ENCODE measurements at regions of chr22 and their contacts with region 1.

Region 1: GRCh38 chr22:43036282-43036829 is 21.4 kb upstream of the PACSIN2 start:
- DNase-seq: no peak
- H3K4me3 Mint-ChIP-seq: no peak overlapping the region
- H3K27ac Mint-ChIP-seq: no peak overlapping the region
- H3K4me1 Mint-ChIP-seq: peaks cover 2% of the 10 kb centered on the region
- H3K27me3 Mint-ChIP-seq: no peaks in the 10 kb centered on the region

Region 2: DNA sequence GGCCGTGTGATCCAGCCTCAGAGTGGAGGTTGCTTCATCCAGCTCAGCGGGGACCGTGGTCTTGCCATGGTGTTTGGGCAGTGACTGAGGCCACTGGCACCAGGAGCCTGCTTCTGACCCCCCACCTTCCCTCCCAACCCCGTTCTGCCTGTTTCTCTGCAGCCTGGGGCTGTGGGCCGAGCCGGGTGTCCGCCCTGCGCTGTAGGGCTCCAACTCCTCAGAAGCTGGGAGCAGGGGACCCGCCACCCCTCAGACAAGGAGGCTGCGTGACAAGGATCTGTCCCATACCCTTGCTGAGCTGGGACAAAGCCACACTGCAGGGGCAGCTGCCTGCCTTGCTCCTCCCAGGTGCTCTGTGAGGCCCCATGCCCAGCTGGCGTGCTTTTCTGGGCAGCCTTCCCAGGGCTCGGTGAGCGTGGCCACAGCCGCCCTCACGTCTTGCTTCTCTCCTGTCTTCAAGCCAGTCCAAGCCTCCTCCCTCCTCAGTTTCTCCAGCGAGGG is 167.6 kb before region 1 on chr22:
- CTCF ChIA-PET with region 1: interaction called, 19 read pairs
- POLR2A ChIA-PET with region 1: no interaction called
- intact Hi-C with region 1: loop called (anchors 5 kb)
- DNase-seq: no peak
- H3K4me3 Mint-ChIP-seq: no peak overlapping the region
- H3K27ac Mint-ChIP-seq: no peak overlapping the region
- H3K4me1 Mint-ChIP-seq: peaks cover 5% of the 10 kb centered on the region
- H3K27me3 Mint-ChIP-seq: no peaks in the 10 kb centered on the region

Region 3: GRCh38 chr22:42895087-42895486 is 141.3 kb before region 1 on chr22:
- CTCF ChIA-PET with region 1: interaction called, 10 read pairs
- POLR2A ChIA-PET with region 1: no interaction called
- intact Hi-C with region 1: no loop called
- DNase-seq: peak; percentile 50
- H3K4me3 Mint-ChIP-seq: no peak overlapping the region
- H3K27ac Mint-ChIP-seq: peak overlapping the region; percentile 18
- H3K4me1 Mint-ChIP-seq: peaks cover 35% of the 10 kb centered on the region
- H3K27me3 Mint-ChIP-seq: no peaks in the 10 kb centered on the region

Region 4: GRCh38 chr22:43007519-43008102 is 28.7 kb before region 1 on chr22:
- CTCF ChIA-PET with region 1: interaction called, 11 read pairs
- POLR2A ChIA-PET with region 1: no interaction called
- intact Hi-C with region 1: no loop called
- DNase-seq: no peak
- H3K4me3 Mint-ChIP-seq: no peak overlapping the region
- H3K27ac Mint-ChIP-seq: no peak overlapping the region
- H3K4me1 Mint-ChIP-seq: peaks cover 60% of the 10 kb centered on the region
- H3K27me3 Mint-ChIP-seq: no peaks in the 10 kb centered on the region